ENCODE measurements at regions of chr4 and their contacts with region 1.

Region 1: DNA sequence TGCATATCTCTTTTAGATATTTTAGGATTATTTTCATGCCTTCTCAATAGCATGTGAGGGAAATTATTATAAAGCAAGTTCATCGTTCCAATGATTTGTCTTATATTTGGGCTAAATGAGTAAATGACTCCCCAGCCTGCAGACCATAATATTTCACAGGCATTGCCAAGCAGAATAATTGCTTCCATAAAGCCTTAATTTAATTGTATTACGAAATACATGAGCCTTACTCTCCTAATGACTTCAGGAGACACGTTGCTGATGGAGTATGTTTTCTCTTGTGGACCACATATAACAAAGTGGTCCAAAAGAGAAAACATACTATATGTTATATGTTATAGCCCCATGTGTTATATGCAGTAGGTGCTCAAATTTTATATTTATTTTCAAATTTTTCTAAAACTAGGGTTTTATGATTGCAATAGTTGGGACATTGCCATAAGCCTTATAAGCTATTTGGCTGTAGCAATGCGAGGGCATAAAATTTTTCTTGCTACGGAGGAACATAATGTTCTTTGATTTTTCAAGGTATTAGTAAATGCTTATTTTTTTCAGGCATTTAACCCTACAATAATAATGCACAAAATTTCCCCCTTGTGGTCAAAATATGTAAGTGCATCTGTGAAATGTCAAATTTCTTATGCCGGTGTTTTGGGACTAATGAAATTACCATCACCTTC is 26.2 kb upstream of the TMPRSS11D start:
- DNase-seq: no peak
- H3K4me3 Mint-ChIP-seq: no peak overlapping the region
- H3K27ac Mint-ChIP-seq: no peak overlapping the region
- H3K4me1 Mint-ChIP-seq: no peaks in the 10 kb centered on the region
- H3K27me3 Mint-ChIP-seq: peaks cover 6% of the 10 kb centered on the region

Region 2: DNA sequence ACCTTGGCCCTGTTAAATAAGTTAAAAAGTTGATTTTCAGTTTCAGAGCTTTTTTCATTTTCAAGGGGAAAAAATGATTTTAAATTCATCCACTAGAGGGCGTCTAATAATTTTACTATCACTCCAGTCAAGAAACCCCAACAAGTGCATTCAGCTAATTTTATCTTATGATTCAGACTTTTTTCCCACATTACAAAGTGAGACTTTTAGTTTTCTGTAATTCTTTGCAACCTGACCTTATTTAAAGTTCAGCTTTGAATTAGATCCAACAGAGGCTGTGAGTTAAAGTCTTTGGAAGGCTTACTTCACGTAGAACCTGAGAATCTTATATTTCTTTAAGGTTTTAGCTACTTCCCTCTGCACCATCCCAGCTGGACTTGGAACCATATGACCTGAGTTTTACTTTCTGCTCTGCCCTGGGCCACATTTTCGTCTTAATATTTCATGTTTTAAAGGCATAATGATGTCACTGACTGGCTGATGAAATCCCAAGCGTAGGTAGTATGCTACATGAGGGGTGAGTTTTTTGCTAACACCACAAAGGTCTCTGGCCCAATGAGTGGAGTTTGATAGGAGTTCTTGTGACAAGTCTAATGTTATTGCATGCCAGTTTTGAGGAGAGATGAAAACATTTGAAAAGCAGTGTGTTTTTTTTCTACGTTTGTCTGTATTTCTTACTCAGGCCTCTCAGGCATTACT is 163.1 kb before region 1 on chr4:
- CTCF ChIA-PET with region 1: interaction called, 23 read pairs
- POLR2A ChIA-PET with region 1: no interaction called
- intact Hi-C with region 1: loop called (anchors 5 kb)
- DNase-seq: no peak
- H3K4me3 Mint-ChIP-seq: no peak overlapping the region
- H3K27ac Mint-ChIP-seq: no peak overlapping the region
- H3K4me1 Mint-ChIP-seq: peaks cover 9% of the 10 kb centered on the region
- H3K27me3 Mint-ChIP-seq: no peaks in the 10 kb centered on the region

Region 3: GRCh38 chr4:67871867-67872266 is 38.2 kb before region 1 on chr4:
- CTCF ChIA-PET with region 1: no interaction called
- POLR2A ChIA-PET with region 1: no interaction called
- intact Hi-C with region 1: loop called (anchors 2 kb)
- DNase-seq: no peak
- H3K4me3 Mint-ChIP-seq: no peak overlapping the region
- H3K27ac Mint-ChIP-seq: no peak overlapping the region
- H3K4me1 Mint-ChIP-seq: no peaks in the 10 kb centered on the region
- H3K27me3 Mint-ChIP-seq: no peaks in the 10 kb centered on the region

Region 4: GRCh38 chr4:67883458-67883857 is 26.6 kb before region 1 on chr4:
- CTCF ChIA-PET with region 1: interaction called, 10 read pairs
- POLR2A ChIA-PET with region 1: no interaction called
- intact Hi-C with region 1: no loop called
- DNase-seq: no peak
- H3K4me3 Mint-ChIP-seq: no peak overlapping the region
- H3K27ac Mint-ChIP-seq: no peak overlapping the region
- H3K4me1 Mint-ChIP-seq: no peaks in the 10 kb centered on the region
- H3K27me3 Mint-ChIP-seq: peaks cover 10% of the 10 kb centered on the region

Region 5: GRCh38 chr4:67896421-67897065 is 13.5 kb before region 1 on chr4:
- CTCF ChIA-PET with region 1: interaction called, 12 read pairs
- POLR2A ChIA-PET with region 1: no interaction called
- intact Hi-C with region 1: no loop called
- DNase-seq: no peak
- H3K4me3 Mint-ChIP-seq: no peak overlapping the region
- H3K27ac Mint-ChIP-seq: no peak overlapping the region
- H3K4me1 Mint-ChIP-seq: no peaks in the 10 kb centered on the region
- H3K27me3 Mint-ChIP-seq: no peaks in the 10 kb centered on the region

Region 6: GRCh38 chr4:67922697-67923096 is 12.7 kb after region 1 on chr4:
- CTCF ChIA-PET with region 1: no interaction called
- POLR2A ChIA-PET with region 1: no interaction called
- intact Hi-C with region 1: no loop called
- DNase-seq: no peak
- H3K4me3 Mint-ChIP-seq: no peak overlapping the region
- H3K27ac Mint-ChIP-seq: no peak overlapping the region
- H3K4me1 Mint-ChIP-seq: no peaks in the 10 kb centered on the region
- H3K27me3 Mint-ChIP-seq: peaks cover 10% of the 10 kb centered on the region

Region 7: DNA sequence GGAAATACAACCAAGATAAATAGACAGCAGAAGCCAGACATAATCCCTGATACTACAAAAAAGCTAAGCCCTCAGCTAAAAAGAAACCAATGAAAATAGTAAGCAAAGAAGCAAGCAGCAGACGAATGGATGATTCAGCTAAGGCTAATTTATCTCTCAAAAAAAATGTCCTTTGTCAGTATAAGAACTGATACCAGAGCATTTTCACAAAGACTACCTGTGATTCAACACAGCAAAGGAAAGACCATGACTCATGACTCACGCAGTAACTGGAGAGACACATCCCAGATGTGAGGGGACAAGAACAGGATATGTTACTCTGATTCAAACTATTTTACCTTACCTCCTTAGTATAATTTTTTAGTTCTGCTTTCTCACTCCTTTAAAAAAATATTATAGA is 242.4 kb after region 1 on chr4:
- CTCF ChIA-PET with region 1: no interaction called
- POLR2A ChIA-PET with region 1: no interaction called
- intact Hi-C with region 1: no loop called
- DNase-seq: no peak
- H3K4me3 Mint-ChIP-seq: no peak overlapping the region
- H3K27ac Mint-ChIP-seq: no peak overlapping the region
- H3K4me1 Mint-ChIP-seq: no peaks in the 10 kb centered on the region
- H3K27me3 Mint-ChIP-seq: peaks cover 7% of the 10 kb centered on the region

Measured in activated CD4-positive, alpha-beta memory T cell treated with anti-CD3 and anti-CD28 coated beads for 36 hours (primary cell).